Aorta (tissue), 5 donors: ENCODE measurements at regions of chr5 and their contacts with region 1.

Region 1: DNA sequence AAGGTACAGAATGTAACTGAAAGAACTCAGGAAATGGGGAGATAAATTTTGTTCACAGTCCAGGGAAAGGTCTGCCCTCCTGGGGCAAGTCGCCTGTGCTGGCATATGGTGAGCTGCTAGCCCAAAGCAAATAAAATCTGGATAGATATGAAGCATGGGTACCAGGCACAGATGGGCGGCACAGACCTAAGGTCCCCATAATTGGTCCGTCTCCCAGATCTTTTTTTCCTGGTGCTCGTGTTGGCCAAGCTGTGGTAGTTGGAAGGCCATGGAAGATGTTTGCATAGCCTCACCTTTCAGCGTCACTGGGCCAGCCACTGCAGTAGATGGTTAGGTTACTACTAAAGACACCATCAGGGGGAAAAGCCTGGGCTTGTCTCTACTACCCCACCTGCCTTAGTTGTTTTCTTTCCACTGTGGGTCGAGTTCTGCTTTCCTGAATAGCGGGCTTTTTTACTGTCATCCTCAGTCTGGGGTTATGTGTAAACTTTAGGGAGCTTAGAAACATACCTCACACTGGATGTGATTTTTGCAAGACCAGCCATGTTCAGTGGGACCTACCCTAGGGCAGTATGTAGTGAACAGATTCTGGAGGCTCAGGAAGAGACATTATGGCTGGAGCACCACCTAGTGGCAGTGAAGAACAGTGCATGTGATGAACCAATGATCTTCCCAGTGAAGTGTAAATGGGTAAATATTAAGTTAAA is 24.2 kb upstream of the GLRX start:
- DNase-seq: peak in 1 of 2 donors; percentile 69
- ATAC-seq: peak; percentile 93
- H3K4me3 ChIP-seq: no peak overlapping the region
- H3K27ac ChIP-seq: no peak overlapping the region
- H3K4me1 ChIP-seq: no peaks in the 10 kb centered on the region
- H3K27me3 ChIP-seq: no peaks in the 10 kb centered on the region

Region 2: GRCh38 chr5:95646554-95647431 is 199.9 kb before region 1 on chr5 and contains the start of gene RFESD:
- intact Hi-C with region 1: loop called in 1 of 2 experiments (anchors 5 kb)
- DNase-seq: peak; percentile 99 to 100
- ATAC-seq: peak; percentile 98
- H3K4me3 ChIP-seq: peak within 1 kb of the TSS; percentile 39 to 49
- H3K27ac ChIP-seq: peak within 1 kb of the TSS in 1 of 2 donors; percentile 62
- H3K4me1 ChIP-seq: no peaks in the 10 kb centered on the region
- H3K27me3 ChIP-seq: no peaks in the 10 kb centered on the region
- total RNA-seq, gene RFESD: 0.75 to 3.4 TPM

Region 3: DNA sequence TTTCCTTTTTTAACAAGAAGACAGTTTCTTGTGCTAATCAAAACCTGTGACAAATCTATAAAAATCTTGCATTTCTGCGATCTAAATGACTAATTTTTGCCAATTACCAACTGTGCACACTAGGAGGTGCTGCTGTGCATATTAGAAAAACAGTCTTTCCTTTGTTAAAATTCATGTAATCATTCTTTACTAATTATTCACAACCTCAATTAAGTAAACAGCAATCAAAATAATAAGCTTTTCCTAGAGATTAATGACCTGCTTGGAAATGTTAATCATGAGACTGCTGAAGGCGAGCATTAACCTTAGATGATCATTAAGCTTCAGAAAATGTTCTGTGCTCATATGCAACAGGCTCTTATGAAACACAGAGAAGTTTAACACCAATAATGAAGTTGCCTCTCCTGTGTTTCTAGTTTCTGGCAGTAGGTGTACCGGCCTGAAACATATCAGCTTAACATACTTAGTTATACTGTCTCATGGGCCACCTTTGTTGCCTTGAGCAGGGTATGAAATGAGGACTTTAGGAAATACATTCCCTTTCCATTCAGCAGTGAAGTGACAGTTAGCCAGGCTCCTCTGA is 182.4 kb before region 1 on chr5:
- intact Hi-C with region 1: loop called (anchors 5 kb)
- DNase-seq: no peak
- ATAC-seq: no peak
- H3K4me3 ChIP-seq: no peak overlapping the region
- H3K27ac ChIP-seq: no peak overlapping the region
- H3K4me1 ChIP-seq: peaks cover 0 to under 1% of the 10 kb centered on the region in 2 donors
- H3K27me3 ChIP-seq: no peaks in the 10 kb centered on the region

Region 4: GRCh38 chr5:95669540-95669939 is 177.2 kb before region 1 on chr5:
- intact Hi-C with region 1: loop called (anchors 5 kb)
- DNase-seq: peak; percentile 75 to 76
- ATAC-seq: peak; percentile 88
- H3K4me3 ChIP-seq: no peak overlapping the region
- H3K27ac ChIP-seq: no peak overlapping the region
- H3K4me1 ChIP-seq: peaks cover 0 to 5% of the 10 kb centered on the region in 2 donors
- H3K27me3 ChIP-seq: no peaks in the 10 kb centered on the region

Region 5: DNA sequence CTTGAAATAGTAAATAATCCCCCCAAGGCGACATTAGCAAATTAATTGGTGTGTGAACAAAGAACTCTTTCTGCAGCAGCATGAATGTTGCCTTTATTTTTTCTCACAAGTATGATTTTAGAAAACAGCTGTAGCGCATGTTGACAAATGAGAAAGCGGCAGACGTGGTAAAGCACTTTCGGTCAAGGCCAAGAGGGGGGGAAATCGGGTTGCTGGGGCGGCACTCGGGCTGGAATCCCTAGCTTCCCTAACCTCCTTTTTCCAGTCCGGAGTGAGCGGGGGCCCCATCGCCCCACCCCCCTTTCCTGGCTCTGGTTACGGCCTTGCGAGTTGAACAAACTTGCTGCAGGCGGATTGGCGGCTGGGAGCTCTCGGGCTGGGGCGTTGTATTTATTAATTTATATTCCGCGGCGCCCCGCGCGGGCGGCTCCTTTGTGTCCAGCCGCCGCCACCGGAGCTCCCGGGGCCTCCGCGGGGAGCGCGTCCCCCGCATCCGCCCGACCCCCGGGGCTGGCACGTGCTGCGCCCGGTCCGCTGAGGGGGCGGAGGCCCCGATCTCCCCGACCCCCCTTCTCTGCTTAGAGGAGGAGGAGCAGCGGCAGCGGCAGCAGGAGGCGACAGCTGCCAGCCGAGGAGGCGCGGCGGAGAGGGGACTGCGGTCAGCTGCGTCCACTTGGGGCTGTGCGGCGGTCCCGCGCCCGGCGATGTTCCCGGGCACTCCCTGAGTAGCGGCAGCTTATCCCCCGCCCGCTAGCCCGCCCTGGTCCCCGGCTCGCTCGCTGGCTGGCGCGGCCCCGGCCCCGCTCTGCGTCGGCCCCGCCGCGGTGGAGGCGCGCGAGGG is 115.8 kb before region 1 on chr5 and contains the start of gene RHOBTB3:
- intact Hi-C with region 1: loop called in 1 of 2 experiments (anchors 5 kb)
- DNase-seq: peak; percentile 92 to 93
- ATAC-seq: peak; percentile 79
- H3K4me3 ChIP-seq: peak within 1 kb of the TSS; percentile 38 to 80
- H3K27ac ChIP-seq: peak within 1 kb of the TSS in 1 of 2 donors; percentile 9
- H3K4me1 ChIP-seq: no peaks in the 10 kb centered on the region
- H3K27me3 ChIP-seq: no peaks in the 10 kb centered on the region
- total RNA-seq, gene RHOBTB3: 36.8 to 53.2 TPM

Region 6: GRCh38 chr5:95781101-95781583 is 65.6 kb before region 1 on chr5:
- intact Hi-C with region 1: loop called (anchors 1 kb)
- DNase-seq: peak; percentile 86 to 88
- ATAC-seq: peak; percentile 96
- H3K4me3 ChIP-seq: no peak overlapping the region
- H3K27ac ChIP-seq: no peak overlapping the region
- H3K4me1 ChIP-seq: no peaks in the 10 kb centered on the region
- H3K27me3 ChIP-seq: no peaks in the 10 kb centered on the region

Region 7: GRCh38 chr5:95808686-95809413 is 37.9 kb before region 1 on chr5:
- intact Hi-C with region 1: loop called in 1 of 2 experiments (anchors 5 kb)
- DNase-seq: peak; percentile 89
- ATAC-seq: peak; percentile 93
- H3K4me3 ChIP-seq: no peak overlapping the region
- H3K27ac ChIP-seq: peak overlapping the region; percentile 32 to 78
- H3K4me1 ChIP-seq: peaks cover 3 to 6% of the 10 kb centered on the region in 2 donors
- H3K27me3 ChIP-seq: no peaks in the 10 kb centered on the region